H1 (cell line): ENCODE measurements at regions of chr6 and their contacts with region 1.

Region 1: GRCh38 chr6:97726378-97726777 is 443.4 kb upstream of the MMS22L start:
- DNase-seq: peak in 1 of 2 experiments; percentile 9
- H3K4me3 ChIP-seq: no peak overlapping the region
- H3K27ac ChIP-seq: no peak overlapping the region
- H3K4me1 ChIP-seq: no peaks in the 10 kb centered on the region; a peak in 1 of 7 replicates
- H3K27me3 ChIP-seq: no peaks in the 10 kb centered on the region
- CTCF ChIP-seq: peak in 2 of 3 experiments; percentile 75; a peak in 3 of 4 replicates
- EP300 ChIP-seq: no peak
- POLR2A ChIP-seq: no peak
- RAD21 ChIP-seq: peak; percentile 94 to 97

Region 2: DNA sequence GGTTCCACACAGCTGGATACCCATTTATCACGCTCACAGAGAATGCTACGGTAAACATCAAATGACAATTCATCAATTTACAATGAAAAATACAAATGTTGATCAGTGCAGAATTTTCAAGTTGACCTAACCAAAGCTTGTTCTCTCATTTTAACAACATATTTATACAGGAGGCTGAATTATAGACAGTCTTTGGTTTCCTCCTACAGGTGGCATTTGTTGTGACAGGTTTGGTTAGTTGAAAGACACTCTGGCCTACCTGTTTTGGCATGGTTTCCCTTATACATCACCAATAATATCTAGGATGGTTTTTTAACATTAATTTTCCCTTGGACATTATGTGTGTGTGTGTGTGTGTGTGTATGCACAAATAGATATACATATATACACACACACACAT is 199.1 kb after region 1 on chr6:
- CTCF ChIA-PET with region 1: interaction called, 28 read pairs
- POLR2A ChIA-PET with region 1: no interaction called
- DNase-seq: no peak
- H3K4me3 ChIP-seq: no peak overlapping the region
- H3K27ac ChIP-seq: no peak overlapping the region
- H3K4me1 ChIP-seq: peaks cover 0 to 4% (median 3%) of the 10 kb centered on the region in 4 experiments; a peak in 2 of 7 replicates
- H3K27me3 ChIP-seq: no peaks in the 10 kb centered on the region
- CTCF ChIP-seq: peak in 2 of 3 experiments; percentile 35 to 50; a peak in 2 of 4 replicates
- EP300 ChIP-seq: no peak
- POLR2A ChIP-seq: no peak
- RAD21 ChIP-seq: peak; percentile 76